ENCODE measurements at regions of chr5 and their contacts with region 1.

Region 1: DNA sequence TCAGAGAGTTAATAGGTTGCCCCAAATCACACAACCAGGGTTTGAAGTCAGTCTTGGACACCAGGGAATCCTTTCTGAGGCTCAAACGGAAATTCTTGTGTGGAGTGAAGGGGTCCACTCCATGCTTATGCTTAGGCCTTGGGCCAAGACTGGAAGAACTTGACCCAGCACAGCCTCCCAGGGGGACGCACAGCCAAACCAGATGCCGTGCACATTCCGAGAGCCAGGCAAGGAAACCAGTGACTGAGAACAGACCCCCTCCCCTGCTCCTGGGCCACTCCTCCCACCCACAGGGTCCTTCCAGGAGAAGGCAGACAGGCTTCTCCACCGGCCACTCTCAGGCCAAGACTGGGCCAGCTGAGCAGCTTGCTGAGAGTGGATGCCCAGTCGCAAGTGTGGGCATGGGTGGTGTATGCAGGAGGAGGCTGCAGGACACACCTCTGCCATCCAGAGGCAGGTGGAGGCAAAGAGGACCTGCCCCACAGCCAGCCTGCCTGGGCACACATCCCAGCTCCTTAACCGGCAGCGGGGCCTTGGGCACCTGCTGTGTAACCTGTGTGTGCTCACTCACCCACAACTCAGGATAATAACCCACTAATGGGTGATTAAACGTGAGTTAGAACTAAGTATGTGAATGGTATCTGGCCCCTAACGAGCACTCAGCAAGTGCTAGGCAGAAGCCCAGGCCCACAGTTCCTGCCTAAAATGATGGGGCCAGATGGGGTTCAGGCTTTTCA is 38.0 kb downstream of the NIPAL4 start:
- DNase-seq: no peak
- H3K4me3 Mint-ChIP-seq: no peak overlapping the region
- H3K27ac Mint-ChIP-seq: no peak overlapping the region
- H3K4me1 Mint-ChIP-seq: peaks cover 52% of the 10 kb centered on the region
- H3K27me3 Mint-ChIP-seq: no peaks in the 10 kb centered on the region

Region 2: GRCh38 chr5:157486221-157486681 is 11.8 kb before region 1 on chr5:
- intact Hi-C with region 1: loop called (anchors 1 kb)
- DNase-seq: no peak
- H3K4me3 Mint-ChIP-seq: no peak overlapping the region
- H3K27ac Mint-ChIP-seq: peak overlapping the region; percentile 85
- H3K4me1 Mint-ChIP-seq: peaks cover 74% of the 10 kb centered on the region
- H3K27me3 Mint-ChIP-seq: no peaks in the 10 kb centered on the region

Measured in activated T-helper 1 cell treated with anti-CD3 and anti-CD28 coated beads, Interleukin-12 subunit alpha, Interleukin-12 subunit beta, Interleukin-2, Interleukin-4 antibody, amounts not matched to agents 30 ng/mL and 10 ng/mL and 1 ng/mL, durations not matched to agents 14 hours and 24 hours and 36 hours (primary cell).